Activated naive CD4-positive, alpha-beta T cell treated with anti-CD3 and anti-CD28 coated beads for 36 hours (primary cell): ENCODE measurements at regions of chr9 and their contacts with region 1.

Region 1: GRCh38 chr9:99026338-99027298 is 78.3 kb upstream of the TGFBR1 start:
- DNase-seq: no peak
- H3K4me3 Mint-ChIP-seq: no peak overlapping the region
- H3K27ac Mint-ChIP-seq: no peak overlapping the region
- H3K4me1 Mint-ChIP-seq: peaks cover 20% of the 10 kb centered on the region
- H3K27me3 Mint-ChIP-seq: no peaks in the 10 kb centered on the region

Region 2: GRCh38 chr9:98712987-98713386 is 313.6 kb before region 1 on chr9:
- CTCF ChIA-PET with region 1: no interaction called
- intact Hi-C with region 1: no loop called
- DNase-seq: no peak
- H3K4me3 Mint-ChIP-seq: no peak overlapping the region
- H3K27ac Mint-ChIP-seq: no peak overlapping the region
- H3K4me1 Mint-ChIP-seq: no peaks in the 10 kb centered on the region
- H3K27me3 Mint-ChIP-seq: peaks cover 30% of the 10 kb centered on the region

Region 3: GRCh38 chr9:98781588-98782383 is 244.8 kb before region 1 on chr9:
- CTCF ChIA-PET with region 1: no interaction called
- intact Hi-C with region 1: no loop called
- DNase-seq: no peak
- H3K4me3 Mint-ChIP-seq: no peak overlapping the region
- H3K27ac Mint-ChIP-seq: no peak overlapping the region
- H3K4me1 Mint-ChIP-seq: no peaks in the 10 kb centered on the region
- H3K27me3 Mint-ChIP-seq: no peaks in the 10 kb centered on the region

Region 4: DNA sequence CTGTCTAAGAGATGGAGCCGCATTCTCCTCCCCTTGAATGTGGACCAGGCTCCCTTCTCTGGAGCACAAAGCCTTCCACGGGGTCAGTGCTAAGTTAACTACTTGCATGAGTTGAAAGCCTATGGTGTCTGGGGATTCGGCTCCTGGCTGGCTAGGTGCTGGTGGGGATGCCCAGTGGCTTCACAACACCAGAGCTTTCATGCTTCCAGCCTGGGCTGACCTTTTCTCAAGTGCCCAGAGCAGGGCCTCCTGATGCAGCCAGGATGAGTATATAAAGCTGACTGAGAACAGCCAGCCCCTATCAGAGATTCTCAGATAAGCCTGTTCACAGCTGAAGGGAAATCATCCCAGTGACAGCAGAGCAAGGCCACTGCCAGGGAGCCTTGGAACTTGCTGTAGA is 207.4 kb before region 1 on chr9:
- CTCF ChIA-PET with region 1: no interaction called
- intact Hi-C with region 1: no loop called
- DNase-seq: no peak
- H3K4me3 Mint-ChIP-seq: no peak overlapping the region
- H3K27ac Mint-ChIP-seq: no peak overlapping the region
- H3K4me1 Mint-ChIP-seq: no peaks in the 10 kb centered on the region
- H3K27me3 Mint-ChIP-seq: no peaks in the 10 kb centered on the region

Region 5: DNA sequence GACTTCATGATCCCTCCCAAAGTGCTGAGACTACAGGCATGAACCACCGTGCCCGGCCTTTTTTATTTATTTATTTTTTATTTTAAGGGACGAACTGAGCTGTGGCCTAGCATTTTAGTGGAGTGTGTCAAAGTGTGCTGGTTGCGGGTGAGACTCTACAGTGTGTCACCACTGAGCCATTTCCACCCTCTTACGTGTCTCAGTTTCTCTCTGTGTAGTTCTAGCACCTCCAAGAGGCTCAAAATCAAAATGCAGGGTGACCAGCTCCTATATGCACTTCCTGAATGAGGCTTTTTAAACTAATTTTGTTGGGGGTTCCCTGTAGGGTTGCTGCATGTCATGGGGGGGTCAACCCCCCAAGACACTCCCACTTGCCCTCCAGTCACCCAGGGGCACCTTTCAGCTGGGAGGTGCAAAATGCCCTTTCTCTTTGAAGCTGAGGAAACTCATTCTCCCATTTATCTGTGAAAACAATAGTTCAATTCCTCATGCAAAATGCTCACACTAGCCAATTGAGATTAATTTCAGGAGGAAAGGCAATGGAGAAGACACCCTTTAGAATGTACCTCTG is 13.6 kb before region 1 on chr9:
- CTCF ChIA-PET with region 1: interaction called, 13 read pairs
- intact Hi-C with region 1: no loop called
- DNase-seq: peak; percentile 26
- H3K4me3 Mint-ChIP-seq: no peak overlapping the region
- H3K27ac Mint-ChIP-seq: peak overlapping the region; percentile 72
- H3K4me1 Mint-ChIP-seq: peaks cover 20% of the 10 kb centered on the region
- H3K27me3 Mint-ChIP-seq: no peaks in the 10 kb centered on the region

Region 6: GRCh38 chr9:99253772-99254431 is 227.3 kb after region 1 on chr9:
- CTCF ChIA-PET with region 1: no interaction called
- intact Hi-C with region 1: no loop called
- DNase-seq: peak; percentile 96
- H3K4me3 Mint-ChIP-seq: peak overlapping the region; percentile 44
- H3K27ac Mint-ChIP-seq: peak overlapping the region; percentile 84
- H3K4me1 Mint-ChIP-seq: peaks cover 34% of the 10 kb centered on the region
- H3K27me3 Mint-ChIP-seq: peaks cover 18% of the 10 kb centered on the region